ENCODE measurements at regions of chrX and their contacts with region 1.

Region 1: GRCh38 chrX:45324941-45325340 is 124.3 kb upstream of the DIPK2B start:
- DNase-seq: no peak
- H3K4me3 ChIP-seq: no peak overlapping the region
- CTCF ChIP-seq: no peak
- POLR2A ChIP-seq: no peak

Region 2: GRCh38 chrX:44874420-44875184 is 450.3 kb before region 1 on chrX:
- intact Hi-C with region 1: loop called (anchors 5 kb)
- DNase-seq: peak in 1 of 2 donors; percentile 15
- H3K4me3 ChIP-seq: peak overlapping the region; percentile 60
- CTCF ChIP-seq: no peak
- POLR2A ChIP-seq: no peak

Region 3: DNA sequence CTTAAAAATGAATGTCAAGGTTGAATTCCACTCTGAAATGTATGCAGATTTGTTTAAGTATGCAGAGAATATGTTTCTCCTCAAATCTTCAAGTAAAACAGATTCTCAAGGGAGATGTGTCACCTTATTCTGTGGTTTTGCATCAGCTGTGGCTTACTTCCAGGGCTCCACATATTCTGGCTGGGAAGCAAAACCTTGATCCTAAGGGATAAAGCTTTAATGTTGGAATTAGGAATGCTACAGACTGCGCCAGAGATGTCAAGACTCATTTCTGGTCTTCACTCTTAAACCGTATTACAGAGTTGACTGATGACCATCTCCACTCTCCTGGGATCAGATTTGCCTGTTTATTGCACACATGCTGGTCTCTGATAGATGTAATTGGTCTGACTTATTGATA is 19.7 kb after region 1 on chrX:
- intact Hi-C with region 1: no loop called
- DNase-seq: no peak
- H3K4me3 ChIP-seq: no peak overlapping the region
- CTCF ChIP-seq: no peak
- POLR2A ChIP-seq: no peak

Region 4: DNA sequence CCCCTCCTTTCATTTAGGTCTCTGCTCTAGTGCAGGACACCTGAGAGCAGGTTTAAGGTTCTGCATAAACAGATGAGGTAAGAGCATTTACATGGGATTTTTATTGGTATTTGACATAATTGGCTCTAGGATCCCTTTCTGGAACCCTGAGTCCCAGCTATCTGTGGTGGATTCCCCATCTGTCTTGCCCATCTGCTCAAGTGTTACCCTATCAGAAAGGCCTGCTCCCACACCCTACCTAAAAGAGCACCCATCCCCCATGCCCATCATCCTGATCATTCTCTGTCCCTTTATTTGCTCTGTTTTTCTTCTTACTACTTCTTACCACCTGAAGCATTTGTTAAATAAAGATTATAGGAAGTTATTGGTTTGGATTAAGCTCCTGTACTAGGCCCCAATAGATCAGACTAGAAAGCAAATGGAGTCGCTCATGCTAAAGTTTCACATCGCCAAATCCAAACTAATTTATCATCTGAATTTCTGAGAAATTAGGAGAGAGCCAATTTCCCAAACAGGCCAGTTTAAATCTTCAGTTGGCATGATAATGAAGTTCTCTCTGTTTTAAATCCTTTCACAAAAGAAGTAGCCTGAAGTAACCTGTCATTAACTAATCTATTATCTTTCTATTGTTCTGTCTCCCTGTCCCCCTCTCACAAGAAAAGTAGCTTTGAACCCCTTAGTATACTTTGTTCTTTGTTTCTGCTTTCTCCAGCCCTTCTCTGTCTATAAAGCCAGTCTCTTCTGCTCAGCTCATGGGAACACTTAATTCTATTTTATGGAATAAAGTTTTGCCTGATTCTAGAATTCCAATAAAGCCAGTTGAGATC is 1041.7 kb after region 1 on chrX:
- intact Hi-C with region 1: no loop called
- DNase-seq: no peak
- H3K4me3 ChIP-seq: no peak overlapping the region
- CTCF ChIP-seq: no peak
- POLR2A ChIP-seq: no peak

Measured in lower leg skin (tissue), 4 donors.